CD8-positive, alpha-beta memory T cell (primary cell): ENCODE measurements at regions of chr5 and their contacts with region 1.

Region 1: DNA sequence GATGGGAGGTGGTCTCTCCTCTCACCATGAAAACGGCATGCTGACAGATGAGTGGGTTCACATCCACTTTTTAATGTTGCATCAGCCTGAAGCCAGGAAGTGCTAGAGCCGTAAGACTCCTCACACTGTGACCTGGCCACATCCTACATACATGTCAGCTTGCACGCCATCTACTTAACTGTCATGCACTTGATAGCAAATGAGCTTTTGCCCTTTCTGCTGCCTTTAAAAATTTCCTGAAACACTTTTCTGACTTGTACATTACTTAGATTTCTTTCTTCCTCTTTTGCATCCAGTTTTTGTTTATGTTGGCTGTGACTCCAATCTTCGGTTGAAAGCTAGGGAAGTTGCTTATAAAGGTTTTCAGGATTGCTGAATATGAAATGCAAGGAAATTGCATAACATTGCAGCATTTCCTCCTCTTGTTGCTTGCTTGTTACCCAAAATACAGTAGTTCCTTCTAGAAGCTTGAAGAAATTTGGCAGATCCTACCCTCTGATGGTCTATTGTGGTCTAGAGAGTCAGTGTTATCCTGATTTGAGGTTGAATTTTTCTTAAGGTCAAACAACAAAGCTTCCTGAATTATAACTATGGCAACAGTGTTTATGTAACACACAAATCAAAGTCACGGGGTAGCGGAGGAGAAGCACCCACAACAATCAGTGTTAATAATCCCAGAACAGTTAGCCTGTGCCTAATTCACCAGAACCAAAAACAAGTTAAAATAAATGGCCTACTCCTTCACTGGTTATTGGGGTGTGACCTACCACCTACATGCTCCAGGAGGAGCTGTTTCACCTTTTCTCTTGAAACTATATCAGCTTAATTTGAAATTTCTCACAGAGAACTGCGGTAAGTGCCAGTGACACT is 232.5 kb downstream of the ARHGAP26 start:
- DNase-seq: peak; percentile 48 to 87 (median 58)
- H3K4me3 ChIP-seq: peak overlapping the region; percentile 19
- H3K4me3 Mint-ChIP-seq: peak overlapping the region; percentile 55 to 80 (median 73)
- H3K27ac ChIP-seq: peak overlapping the region; percentile 81
- H3K27ac Mint-ChIP-seq: peak overlapping the region; percentile 96 to 100 (median 98)
- H3K4me1 ChIP-seq: peaks cover 62% of the 10 kb centered on the region
- H3K4me1 Mint-ChIP-seq: peaks cover 86 to 94% (median 93%) of the 10 kb centered on the region in 3 donors
- H3K27me3 ChIP-seq: no peaks in the 10 kb centered on the region
- H3K27me3 Mint-ChIP-seq: no peaks in the 10 kb centered on the region

Region 2: GRCh38 chr5:142716963-142717362 is 285.7 kb before region 1 on chr5:
- CTCF ChIA-PET with region 1: no interaction called
- POLR2A ChIA-PET with region 1: no interaction called
- DNase-seq: peak in 1 of 5 donors; percentile 52
- H3K4me3 ChIP-seq: no peak overlapping the region
- H3K4me3 Mint-ChIP-seq: no peak overlapping the region
- H3K27ac ChIP-seq: no peak overlapping the region
- H3K27ac Mint-ChIP-seq: no peak overlapping the region
- H3K4me1 ChIP-seq: peaks cover 13% of the 10 kb centered on the region
- H3K4me1 Mint-ChIP-seq: peaks cover 16 to 22% (median 16%) of the 10 kb centered on the region in 3 donors
- H3K27me3 ChIP-seq: no peaks in the 10 kb centered on the region
- H3K27me3 Mint-ChIP-seq: peaks cover 0 to 4% of the 10 kb centered on the region in 2 donors

Region 3: DNA sequence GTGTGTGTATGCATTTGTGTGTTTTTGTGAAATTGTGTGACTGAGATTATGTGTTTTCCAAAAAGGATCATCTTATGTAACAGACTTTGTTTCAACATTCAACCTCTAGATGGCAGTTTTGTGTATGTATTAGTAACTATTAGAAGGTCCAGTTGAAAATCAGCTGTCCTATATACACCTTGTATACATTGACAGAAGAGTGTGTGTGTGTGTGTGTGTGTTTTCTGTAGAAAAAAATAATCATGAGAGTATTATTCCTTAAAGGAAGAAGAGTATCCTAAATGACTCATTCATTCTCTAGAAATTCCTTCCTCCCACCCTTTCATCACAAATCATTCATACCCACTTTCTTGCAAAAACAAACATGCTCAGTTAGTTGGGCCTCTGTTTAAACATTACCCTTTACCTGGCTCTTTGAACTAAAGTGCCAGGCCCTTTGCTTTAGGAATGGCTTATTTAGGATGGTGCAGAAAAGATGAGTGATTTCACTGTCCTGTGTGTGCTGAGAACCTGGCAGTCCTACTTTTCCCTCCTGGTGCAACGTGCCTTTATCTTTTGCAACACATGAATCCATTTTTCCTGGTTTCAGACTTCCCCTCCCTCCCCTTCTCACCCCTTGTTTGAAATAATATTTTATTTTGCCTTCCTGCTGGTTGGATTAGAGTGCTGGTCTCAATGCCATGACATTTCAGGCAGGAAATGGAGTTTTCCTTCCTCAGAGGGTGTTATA is 80.3 kb before region 1 on chr5:
- CTCF ChIA-PET with region 1: interaction called, 19 read pairs
- POLR2A ChIA-PET with region 1: interaction called, 5 read pairs
- DNase-seq: peak in 1 of 5 donors; percentile 5
- H3K4me3 ChIP-seq: no peak overlapping the region
- H3K4me3 Mint-ChIP-seq: no peak overlapping the region
- H3K27ac ChIP-seq: no peak overlapping the region
- H3K27ac Mint-ChIP-seq: peak overlapping the region; percentile 59 to 93 (median 82)
- H3K4me1 ChIP-seq: peaks cover 13% of the 10 kb centered on the region
- H3K4me1 Mint-ChIP-seq: peaks cover 41 to 54% (median 53%) of the 10 kb centered on the region in 3 donors
- H3K27me3 ChIP-seq: no peaks in the 10 kb centered on the region
- H3K27me3 Mint-ChIP-seq: peaks cover 0 to 1% of the 10 kb centered on the region in 2 donors

Region 4: DNA sequence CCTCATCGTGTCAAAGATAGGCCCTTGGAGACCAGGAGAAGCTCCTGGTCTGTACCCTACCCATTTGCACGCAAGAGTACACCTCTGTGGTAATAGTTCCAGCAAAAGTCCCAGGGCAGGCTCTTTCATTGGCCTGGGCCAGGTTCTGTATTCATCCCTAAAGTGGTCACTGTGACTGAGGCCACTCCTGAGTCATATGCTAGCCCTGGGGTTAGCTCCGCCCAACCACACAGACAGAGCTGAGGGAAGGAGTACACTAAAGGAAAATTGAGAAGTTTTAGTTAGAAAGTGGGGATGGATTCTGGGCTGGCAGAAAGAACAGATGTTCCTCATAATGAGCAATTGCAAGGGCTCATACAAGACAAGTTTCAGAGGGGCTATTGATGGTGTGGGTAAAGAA is 25.8 kb before region 1 on chr5:
- CTCF ChIA-PET with region 1: interaction called, 13 read pairs
- POLR2A ChIA-PET with region 1: interaction called, 11 read pairs
- DNase-seq: no peak
- H3K4me3 ChIP-seq: no peak overlapping the region
- H3K4me3 Mint-ChIP-seq: peak overlapping the region in 6 of 7 donors; percentile 61 to 86 (median 77)
- H3K27ac ChIP-seq: peak overlapping the region; percentile 44
- H3K27ac Mint-ChIP-seq: peak overlapping the region; percentile 90 to 98 (median 96)
- H3K4me1 ChIP-seq: peaks cover 83% of the 10 kb centered on the region
- H3K4me1 Mint-ChIP-seq: peaks cover 95 to 98% (median 96%) of the 10 kb centered on the region in 3 donors
- H3K27me3 ChIP-seq: no peaks in the 10 kb centered on the region
- H3K27me3 Mint-ChIP-seq: no peaks in the 10 kb centered on the region

Region 5: GRCh38 chr5:142981886-142982820 is 20.5 kb before region 1 on chr5:
- CTCF ChIA-PET with region 1: interaction called, 13 read pairs
- POLR2A ChIA-PET with region 1: interaction called, 6 read pairs
- DNase-seq: no peak
- H3K4me3 ChIP-seq: no peak overlapping the region
- H3K4me3 Mint-ChIP-seq: peak overlapping the region; percentile 6 to 78 (median 42)
- H3K27ac ChIP-seq: no peak overlapping the region
- H3K27ac Mint-ChIP-seq: peak overlapping the region; percentile 83 to 99 (median 94)
- H3K4me1 ChIP-seq: peaks cover 56% of the 10 kb centered on the region
- H3K4me1 Mint-ChIP-seq: peaks cover 74 to 81% (median 80%) of the 10 kb centered on the region in 3 donors
- H3K27me3 ChIP-seq: no peaks in the 10 kb centered on the region
- H3K27me3 Mint-ChIP-seq: no peaks in the 10 kb centered on the region

Region 6: DNA sequence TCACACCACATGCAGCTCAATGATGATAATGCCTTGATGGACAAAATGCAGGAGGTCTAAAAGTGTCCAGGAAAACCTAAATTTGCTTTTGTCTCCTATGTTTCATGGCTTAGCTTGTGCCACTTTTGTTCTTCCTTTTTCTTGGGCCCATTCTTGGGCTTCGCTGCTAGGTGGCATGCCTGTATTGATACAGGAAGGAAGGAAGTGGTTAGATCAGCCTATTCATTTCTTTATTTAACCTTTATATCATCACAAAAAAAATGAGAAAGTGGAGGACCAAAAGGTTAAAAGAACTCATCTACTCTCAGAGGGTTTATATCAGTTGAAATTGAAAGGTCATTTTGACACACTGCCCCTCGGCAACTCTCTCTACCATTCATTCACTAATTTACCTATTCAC is 27.7 kb after region 1 on chr5:
- CTCF ChIA-PET with region 1: interaction called, 11 read pairs
- POLR2A ChIA-PET with region 1: no interaction called
- DNase-seq: peak in 3 of 5 donors; percentile 5 to 59 (median 20)
- H3K4me3 ChIP-seq: no peak overlapping the region
- H3K4me3 Mint-ChIP-seq: peak overlapping the region in 6 of 7 donors; percentile 26 to 79 (median 63)
- H3K27ac ChIP-seq: no peak overlapping the region
- H3K27ac Mint-ChIP-seq: peak overlapping the region in 7 of 8 donors; percentile 48 to 87 (median 75)
- H3K4me1 ChIP-seq: peaks cover 23% of the 10 kb centered on the region
- H3K4me1 Mint-ChIP-seq: peaks cover 39 to 54% (median 52%) of the 10 kb centered on the region in 3 donors
- H3K27me3 ChIP-seq: no peaks in the 10 kb centered on the region
- H3K27me3 Mint-ChIP-seq: no peaks in the 10 kb centered on the region

Region 7: GRCh38 chr5:143084407-143084806 is 81.7 kb after region 1 on chr5:
- CTCF ChIA-PET with region 1: no interaction called
- POLR2A ChIA-PET with region 1: no interaction called
- DNase-seq: no peak
- H3K4me3 ChIP-seq: no peak overlapping the region
- H3K4me3 Mint-ChIP-seq: no peak overlapping the region
- H3K27ac ChIP-seq: no peak overlapping the region
- H3K27ac Mint-ChIP-seq: peak overlapping the region in 1 of 8 donors; percentile 28
- H3K4me1 ChIP-seq: no peaks in the 10 kb centered on the region
- H3K4me1 Mint-ChIP-seq: peaks cover 0 to 19% (median 4%) of the 10 kb centered on the region in 3 donors
- H3K27me3 ChIP-seq: no peaks in the 10 kb centered on the region
- H3K27me3 Mint-ChIP-seq: peaks cover 0 to 3% of the 10 kb centered on the region in 2 donors

Region 8: DNA sequence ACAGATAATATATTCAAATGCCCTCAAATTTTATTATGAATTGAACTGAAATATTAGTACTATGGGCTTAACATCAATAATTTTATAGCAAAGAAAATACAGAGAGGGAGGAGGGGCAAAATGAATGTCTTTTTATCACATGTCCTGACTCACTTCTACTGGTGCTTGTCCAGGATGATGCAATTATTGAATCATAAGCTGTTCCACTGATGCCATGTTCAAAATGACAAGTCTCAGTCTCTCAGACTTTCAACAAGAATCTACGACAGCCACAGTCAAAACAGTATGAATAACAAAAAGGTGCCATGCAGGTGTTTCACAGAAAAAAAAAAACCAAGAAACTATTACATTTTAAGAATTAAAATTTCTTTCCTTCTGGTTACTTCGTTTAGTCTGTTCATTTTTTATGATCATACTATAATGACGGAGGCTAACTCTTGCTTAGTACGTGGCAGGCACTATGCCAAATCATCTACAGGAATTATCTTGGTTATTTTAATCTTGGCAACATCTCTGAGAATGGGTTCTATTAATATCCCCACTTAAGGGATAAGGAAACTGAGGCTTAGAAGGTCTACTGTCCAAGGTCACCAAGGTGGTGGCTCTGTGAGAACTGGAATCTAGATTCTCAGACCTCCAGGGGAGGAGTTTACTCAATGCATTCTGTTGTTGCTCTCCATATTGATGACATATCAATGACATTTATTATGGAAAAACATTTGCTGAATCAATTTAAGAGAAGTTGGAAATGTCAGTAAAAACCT is 339.3 kb after region 1 on chr5:
- CTCF ChIA-PET with region 1: no interaction called
- POLR2A ChIA-PET with region 1: no interaction called
- DNase-seq: no peak
- H3K4me3 ChIP-seq: no peak overlapping the region
- H3K4me3 Mint-ChIP-seq: no peak overlapping the region
- H3K27ac ChIP-seq: no peak overlapping the region
- H3K27ac Mint-ChIP-seq: peak overlapping the region in 2 of 8 donors; percentile 20 to 32
- H3K4me1 ChIP-seq: peaks cover 6% of the 10 kb centered on the region
- H3K4me1 Mint-ChIP-seq: peaks cover 49 to 65% (median 60%) of the 10 kb centered on the region in 3 donors
- H3K27me3 ChIP-seq: no peaks in the 10 kb centered on the region
- H3K27me3 Mint-ChIP-seq: no peaks in the 10 kb centered on the region

Region 9: DNA sequence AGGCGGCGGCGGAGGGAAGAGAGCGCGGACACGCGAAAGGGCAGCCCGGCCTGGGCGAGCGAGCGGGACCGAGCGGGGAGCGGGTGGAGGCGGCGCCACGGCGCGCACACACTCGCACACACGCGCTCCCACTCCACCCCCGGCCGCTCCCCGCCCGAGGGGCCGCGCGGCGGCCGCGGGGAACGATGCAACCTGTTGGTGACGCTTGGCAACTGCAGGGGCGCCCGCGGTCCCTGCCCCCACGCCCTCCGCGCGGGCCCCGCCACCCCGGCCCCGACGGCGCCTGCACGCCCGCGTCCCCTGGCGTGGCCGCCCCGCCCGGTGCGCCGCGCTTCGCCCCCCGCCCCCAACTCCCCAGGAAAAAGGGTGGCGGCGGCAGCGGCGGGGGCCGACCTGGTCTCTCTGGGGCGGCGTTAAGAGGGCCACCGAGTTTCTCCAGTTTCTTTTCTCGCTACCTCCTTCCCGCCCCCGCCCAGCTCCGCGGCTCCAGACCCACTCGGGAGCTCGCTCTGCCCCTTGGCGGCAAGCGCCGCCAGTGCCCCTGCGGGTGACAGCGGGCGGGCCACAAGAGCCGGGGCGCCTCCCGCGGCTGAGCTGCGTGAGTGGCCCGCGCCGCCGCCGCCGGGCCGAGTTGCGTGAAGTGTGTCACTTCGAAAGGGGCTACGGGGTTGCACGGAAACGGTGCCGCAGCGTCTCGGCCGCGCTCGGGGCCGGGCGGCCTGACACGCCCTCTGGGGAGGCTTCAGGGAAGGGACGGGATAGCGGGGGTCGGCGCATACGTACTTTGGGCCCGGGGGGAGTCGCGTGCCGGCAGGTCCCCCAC is 401.1 kb after region 1 on chr5 and contains the start of gene NR3C1:
- CTCF ChIA-PET with region 1: interaction called, 33 read pairs
- POLR2A ChIA-PET with region 1: interaction called, 53 read pairs
- DNase-seq: peak; percentile 82 to 92 (median 90)
- H3K4me3 ChIP-seq: peak within 1 kb of the TSS; percentile 98
- H3K4me3 Mint-ChIP-seq: peak within 1 kb of the TSS; percentile 94 to 99 (median 97)
- H3K27ac ChIP-seq: peak within 1 kb of the TSS; percentile 92
- H3K27ac Mint-ChIP-seq: peak within 1 kb of the TSS; percentile 96 to 100 (median 99)
- H3K4me1 ChIP-seq: peaks cover 34% of the 10 kb centered on the region
- H3K4me1 Mint-ChIP-seq: peaks cover 43 to 47% (median 43%) of the 10 kb centered on the region in 3 donors
- H3K27me3 ChIP-seq: no peaks in the 10 kb centered on the region
- H3K27me3 Mint-ChIP-seq: no peaks in the 10 kb centered on the region
- total RNA-seq, gene NR3C1: 65.3 to 66.5 TPM

Region 10: DNA sequence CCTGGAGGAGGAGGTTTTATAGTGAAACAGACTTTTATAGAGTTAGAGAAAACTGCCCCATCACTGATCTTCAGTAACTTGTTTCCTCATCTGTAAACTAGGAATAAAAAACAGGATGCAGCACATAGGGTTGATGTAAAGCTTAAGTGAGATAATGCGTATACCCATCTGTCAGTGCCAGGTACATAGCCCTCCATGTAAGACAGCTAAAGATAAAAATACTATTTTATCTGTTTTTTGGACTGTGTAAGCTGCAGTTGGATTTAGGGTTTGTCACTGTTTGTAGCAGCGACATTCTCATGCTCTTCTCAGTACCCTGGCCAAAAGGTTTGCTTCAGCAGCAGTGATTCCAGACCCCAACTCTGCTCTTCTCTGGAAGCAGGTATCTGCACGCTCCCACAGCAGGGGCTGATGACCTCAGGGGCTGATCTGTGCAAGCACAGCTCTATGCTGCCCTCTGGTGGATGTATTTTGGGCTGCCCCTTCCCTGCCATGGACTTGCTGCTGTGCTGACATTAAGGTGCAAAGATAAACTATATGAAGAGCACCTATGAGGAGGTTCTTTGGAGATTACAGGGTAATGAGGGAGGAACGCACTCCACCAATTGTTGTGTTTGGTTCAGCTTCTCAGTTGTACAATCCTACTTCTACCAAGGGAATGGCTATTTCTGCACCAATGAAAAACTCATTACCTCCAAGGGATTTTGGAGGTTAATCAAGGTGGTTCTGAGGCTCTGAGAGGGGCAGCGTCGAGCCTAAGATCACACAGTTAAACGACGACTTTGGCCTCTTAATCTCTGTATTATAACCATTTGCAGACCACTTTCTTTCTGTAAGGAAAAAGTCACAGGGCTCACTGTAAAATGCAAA is 822.4 kb after region 1 on chr5:
- CTCF ChIA-PET with region 1: interaction called, 17 read pairs
- POLR2A ChIA-PET with region 1: no interaction called
- DNase-seq: peak; percentile 64 to 87 (median 67)
- H3K4me3 ChIP-seq: no peak overlapping the region
- H3K4me3 Mint-ChIP-seq: no peak overlapping the region
- H3K27ac ChIP-seq: no peak overlapping the region
- H3K27ac Mint-ChIP-seq: no peak overlapping the region
- H3K4me1 ChIP-seq: peaks cover 13% of the 10 kb centered on the region
- H3K4me1 Mint-ChIP-seq: peaks cover 8 to 19% (median 10%) of the 10 kb centered on the region in 3 donors
- H3K27me3 ChIP-seq: no peaks in the 10 kb centered on the region
- H3K27me3 Mint-ChIP-seq: no peaks in the 10 kb centered on the region